A673 (cell line): ENCODE measurements at regions of chr20 and their contacts with region 1.

Region 1: GRCh38 chr20:25120462-25120861 is 38.5 kb upstream of the VSX1 start:
- DNase-seq: no peak
- H3K4me3 ChIP-seq: no peak overlapping the region
- H3K27ac ChIP-seq: no peak overlapping the region
- H3K4me1 ChIP-seq: no peaks in the 10 kb centered on the region
- H3K27me3 ChIP-seq: peaks cover 60% of the 10 kb centered on the region
- CTCF ChIP-seq: no peak

Region 2: DNA sequence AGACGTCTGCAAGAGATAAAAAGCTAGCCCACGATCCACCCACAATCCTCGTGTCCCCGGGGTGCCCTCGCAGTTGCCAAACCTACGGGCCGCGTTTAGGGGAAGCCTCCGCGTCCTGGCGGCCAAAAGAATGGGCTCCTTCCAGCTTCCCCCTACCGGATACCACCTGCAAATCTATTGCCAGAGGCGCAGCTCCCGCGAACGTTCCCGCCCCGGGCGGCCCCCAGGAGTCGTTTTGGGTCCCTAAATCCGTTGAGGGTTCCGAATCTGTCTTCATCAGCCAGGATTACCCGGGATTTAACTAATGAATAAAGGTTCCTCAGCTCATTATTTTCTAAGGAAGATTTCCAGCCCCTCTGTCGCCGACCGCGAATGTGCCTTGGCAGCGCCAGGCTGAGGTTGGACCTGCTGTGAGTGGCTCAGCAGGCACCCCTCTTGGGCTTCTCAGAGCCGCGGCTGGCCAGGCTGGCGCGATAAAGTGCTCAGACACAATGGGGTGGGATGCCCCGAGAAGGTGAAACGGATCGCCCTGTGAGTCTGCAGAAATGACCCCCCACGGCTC is 35.8 kb before region 1 on chr20:
- CTCF ChIA-PET with region 1: no interaction called
- POLR2A ChIA-PET with region 1: no interaction called
- intact Hi-C with region 1: loop called (anchors 5 kb)
- DNase-seq: no peak
- H3K4me3 ChIP-seq: no peak overlapping the region
- H3K27ac ChIP-seq: no peak overlapping the region
- H3K4me1 ChIP-seq: no peaks in the 10 kb centered on the region
- H3K27me3 ChIP-seq: peaks cover 98% of the 10 kb centered on the region
- CTCF ChIP-seq: no peak